ENCODE measurements at regions of chr16 and their contacts with region 1.

Region 1: GRCh38 chr16:23879735-23880373 is 44.1 kb downstream of the PRKCB start:
- DNase-seq: no peak
- ATAC-seq: no peak
- H3K4me3 ChIP-seq: no peak overlapping the region
- H3K27ac ChIP-seq: no peak overlapping the region
- H3K4me1 ChIP-seq: peaks cover 0 to 37% (median 0%) of the 10 kb centered on the region in 9 donors
- H3K27me3 ChIP-seq: peaks cover 0 to 7% (median 0%) of the 10 kb centered on the region in 7 donors
- CTCF ChIP-seq: no peak

Region 2: GRCh38 chr16:23949630-23950290 is 69.9 kb after region 1 on chr16:
- intact Hi-C with region 1: loop called in 1 of 10 experiments (anchors 10 kb)
- DNase-seq: peak in 1 of 2 donors; percentile 37
- ATAC-seq: peak in 3 of 8 donors; percentile 35 to 58 (median 54)
- H3K4me3 ChIP-seq: no peak overlapping the region
- H3K27ac ChIP-seq: peak overlapping the region in 1 of 10 donors; percentile 78
- H3K4me1 ChIP-seq: peaks cover 0 to 48% (median 0%) of the 10 kb centered on the region in 9 donors
- H3K27me3 ChIP-seq: peaks cover 0 to 32% (median 14%) of the 10 kb centered on the region in 7 donors
- CTCF ChIP-seq: no peak

Region 3: DNA sequence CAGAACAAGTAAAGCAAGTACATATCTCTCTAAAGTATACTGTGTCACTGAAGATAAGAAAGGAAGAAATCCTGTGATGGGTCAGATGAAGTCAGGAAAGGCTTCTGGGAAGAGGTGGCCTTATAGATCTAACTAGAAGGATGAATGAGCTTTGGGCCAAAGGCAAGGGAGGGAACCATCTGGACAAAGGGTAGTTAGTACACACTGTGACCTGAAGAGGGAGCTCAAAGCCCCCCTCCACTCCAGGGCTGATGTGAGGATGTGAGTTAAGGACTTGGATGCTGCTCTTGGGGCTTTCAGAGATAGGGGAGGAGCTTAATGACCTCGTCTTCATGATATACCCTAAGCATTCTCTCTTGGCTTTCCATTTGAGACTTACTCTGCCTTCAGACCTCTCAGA is 191.0 kb after region 1 on chr16:
- intact Hi-C with region 1: no loop called
- DNase-seq: peak in 1 of 2 donors; percentile 6
- ATAC-seq: peak in 1 of 8 donors; percentile 53
- H3K4me3 ChIP-seq: no peak overlapping the region
- H3K27ac ChIP-seq: no peak overlapping the region
- H3K4me1 ChIP-seq: no peaks in the 10 kb centered on the region
- H3K27me3 ChIP-seq: peaks cover 0 to 10% (median 0%) of the 10 kb centered on the region in 7 donors
- CTCF ChIP-seq: peak; percentile 33 to 62 (median 60)

Region 4: DNA sequence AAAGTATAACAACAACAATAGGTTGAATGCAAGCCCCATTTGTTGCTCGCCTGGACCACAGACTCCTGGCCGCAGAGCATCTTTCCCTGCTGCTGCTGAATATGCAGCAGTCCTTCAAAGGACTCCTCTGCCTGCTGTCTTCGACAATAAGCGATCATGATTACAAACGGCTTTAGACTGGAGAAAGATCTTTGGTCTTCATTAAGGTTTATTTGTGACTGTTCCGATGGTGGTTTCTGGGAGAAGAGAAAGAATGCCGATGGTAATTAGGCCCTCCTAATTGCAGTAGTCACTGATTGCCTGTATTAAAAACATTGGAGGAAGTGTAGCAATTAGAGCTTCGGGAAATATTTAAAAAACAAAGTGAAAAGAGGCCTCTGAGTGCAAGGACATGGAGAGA is 514.5 kb after region 1 on chr16:
- intact Hi-C with region 1: no loop called
- DNase-seq: no peak
- ATAC-seq: no peak
- H3K4me3 ChIP-seq: no peak overlapping the region
- H3K27ac ChIP-seq: no peak overlapping the region
- H3K4me1 ChIP-seq: no peaks in the 10 kb centered on the region
- H3K27me3 ChIP-seq: peaks cover 0 to 13% (median 0%) of the 10 kb centered on the region in 7 donors
- CTCF ChIP-seq: no peak

Measured in heart right ventricle (tissue), 16 donors.